ENCODE measurements at regions of chr16 and their contacts with region 1.

Region 1: GRCh38 chr16:69286941-69287713 is 24.0 kb upstream of the VPS4A start:
- DNase-seq: peak; percentile 83 to 90
- H3K4me3 ChIP-seq: no peak overlapping the region
- H3K27ac ChIP-seq: peak overlapping the region; percentile 17 to 52
- H3K4me1 ChIP-seq: peaks cover 0 to 29% (median 9%) of the 10 kb centered on the region in 4 donors
- H3K27me3 ChIP-seq: no peaks in the 10 kb centered on the region
- CTCF ChIP-seq: peak; percentile 57 to 68

Region 2: GRCh38 chr16:69150146-69150865 is 136.8 kb before region 1 on chr16:
- intact Hi-C with region 1: loop called (anchors 2 kb)
- DNase-seq: peak in 1 of 2 donors; percentile 54
- H3K4me3 ChIP-seq: no peak overlapping the region
- H3K27ac ChIP-seq: no peak overlapping the region
- H3K4me1 ChIP-seq: peaks cover 0 to 3% (median 0%) of the 10 kb centered on the region in 4 donors
- H3K27me3 ChIP-seq: no peaks in the 10 kb centered on the region
- CTCF ChIP-seq: peak; percentile 70 to 86